ENCODE measurements at regions of chr4 and their contacts with region 1.

Region 1: GRCh38 chr4:14856076-14856933 is 146.0 kb upstream of the CPEB2 start:
- DNase-seq: peak; percentile 88
- H3K4me3 Mint-ChIP-seq: no peak overlapping the region
- H3K27ac Mint-ChIP-seq: peak overlapping the region; percentile 86
- H3K4me1 Mint-ChIP-seq: peaks cover 24% of the 10 kb centered on the region
- H3K27me3 Mint-ChIP-seq: peaks cover 19% of the 10 kb centered on the region

Region 2: GRCh38 chr4:13892739-13893105 is 963.6 kb before region 1 on chr4:
- CTCF ChIA-PET with region 1: no interaction called
- intact Hi-C with region 1: loop called (anchors 5 kb)
- DNase-seq: no peak
- H3K4me3 Mint-ChIP-seq: no peak overlapping the region
- H3K27ac Mint-ChIP-seq: peak overlapping the region; percentile 55
- H3K4me1 Mint-ChIP-seq: peaks cover 17% of the 10 kb centered on the region
- H3K27me3 Mint-ChIP-seq: peaks cover 17% of the 10 kb centered on the region

Region 3: DNA sequence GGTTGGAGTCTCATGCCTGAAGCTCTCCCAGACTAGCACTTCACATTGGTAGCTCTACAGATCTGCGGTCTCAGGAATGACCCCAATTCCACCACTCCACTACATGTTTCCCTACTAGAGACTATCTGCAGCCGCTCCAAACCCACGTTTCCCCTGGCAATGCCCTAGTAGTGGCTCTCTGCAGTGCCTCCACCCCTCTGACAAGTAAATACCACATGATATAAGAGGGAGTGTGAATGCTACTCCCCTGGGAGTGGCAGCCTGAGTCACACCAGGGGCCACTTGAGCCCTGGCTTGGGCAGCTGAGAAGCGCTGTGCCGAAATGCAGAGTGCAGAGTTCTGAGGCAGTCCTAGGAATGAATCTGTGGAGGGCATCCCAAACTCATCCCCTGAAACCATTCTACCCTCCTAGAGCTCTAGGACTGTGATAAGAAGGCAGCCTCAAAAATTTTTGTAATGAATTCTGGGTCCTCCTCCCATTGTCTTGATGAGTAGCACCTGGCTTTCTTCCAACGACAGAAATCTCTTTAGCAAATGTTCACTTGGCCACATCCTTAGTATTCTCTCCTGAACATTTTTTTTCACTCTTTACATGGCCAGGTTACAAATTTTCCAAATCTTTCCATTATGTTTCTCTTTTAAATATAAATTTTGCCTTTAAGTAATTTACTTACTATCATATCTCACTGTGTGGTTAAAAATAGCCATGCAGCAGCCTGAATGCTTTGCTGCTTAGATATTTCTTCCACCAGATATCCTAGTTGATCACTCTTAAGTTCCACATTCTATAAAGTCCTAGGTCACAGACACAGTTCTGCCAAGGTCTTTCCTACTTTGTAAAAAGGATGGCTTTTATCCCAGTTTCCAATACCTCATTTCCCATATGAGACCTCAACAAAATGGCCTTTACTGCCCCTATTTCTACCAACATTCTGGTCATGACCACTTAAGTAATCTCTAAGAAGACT is 14.2 kb before region 1 on chr4:
- CTCF ChIA-PET with region 1: no interaction called
- intact Hi-C with region 1: loop called (anchors 1 kb)
- DNase-seq: no peak
- H3K4me3 Mint-ChIP-seq: no peak overlapping the region
- H3K27ac Mint-ChIP-seq: peak overlapping the region; percentile 65
- H3K4me1 Mint-ChIP-seq: peaks cover 13% of the 10 kb centered on the region
- H3K27me3 Mint-ChIP-seq: peaks cover 4% of the 10 kb centered on the region

Region 4: GRCh38 chr4:15117270-15117946 is 261.1 kb after region 1 on chr4:
- CTCF ChIA-PET with region 1: no interaction called
- intact Hi-C with region 1: loop called (anchors 1 kb)
- DNase-seq: peak; percentile 13
- H3K4me3 Mint-ChIP-seq: no peak overlapping the region
- H3K27ac Mint-ChIP-seq: no peak overlapping the region
- H3K4me1 Mint-ChIP-seq: peaks cover 11% of the 10 kb centered on the region
- H3K27me3 Mint-ChIP-seq: peaks cover 24% of the 10 kb centered on the region

Region 5: DNA sequence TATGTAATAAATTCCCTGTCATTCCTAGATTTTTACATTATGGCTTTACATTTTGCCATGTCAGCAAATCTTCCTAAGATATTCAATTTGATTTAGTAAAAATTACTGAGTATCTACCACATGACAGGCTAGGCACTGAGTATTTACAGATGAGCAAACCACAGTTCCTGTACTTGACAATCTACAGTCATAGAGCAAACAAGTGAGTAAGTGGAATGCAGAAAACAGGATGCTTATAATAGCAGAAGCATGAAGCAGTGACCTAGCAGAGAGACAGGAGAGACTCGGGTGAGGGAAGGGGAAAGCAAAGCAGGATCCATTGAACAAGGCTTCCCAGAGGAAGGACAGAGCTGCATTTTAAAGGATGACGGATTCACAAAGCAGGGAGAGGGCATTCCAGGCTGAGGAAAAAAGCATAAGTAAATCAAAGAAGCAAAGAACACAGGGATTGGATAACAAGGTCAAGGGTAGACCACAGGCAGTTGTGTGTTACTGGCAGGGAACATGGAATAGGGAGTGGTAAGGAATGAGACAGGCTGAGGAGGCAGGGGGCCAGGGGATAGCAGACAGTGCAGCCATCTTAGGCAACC is 446.8 kb after region 1 on chr4:
- CTCF ChIA-PET with region 1: no interaction called
- intact Hi-C with region 1: no loop called
- DNase-seq: no peak
- H3K4me3 Mint-ChIP-seq: no peak overlapping the region
- H3K27ac Mint-ChIP-seq: no peak overlapping the region
- H3K4me1 Mint-ChIP-seq: no peaks in the 10 kb centered on the region
- H3K27me3 Mint-ChIP-seq: no peaks in the 10 kb centered on the region

Region 6: GRCh38 chr4:15396157-15396800 is 540.0 kb after region 1 on chr4:
- CTCF ChIA-PET with region 1: interaction called, 4 read pairs
- intact Hi-C with region 1: loop called (anchors 1 kb)
- DNase-seq: peak; percentile 79
- H3K4me3 Mint-ChIP-seq: no peak overlapping the region
- H3K27ac Mint-ChIP-seq: no peak overlapping the region
- H3K4me1 Mint-ChIP-seq: peaks cover 26% of the 10 kb centered on the region
- H3K27me3 Mint-ChIP-seq: no peaks in the 10 kb centered on the region

Region 7: DNA sequence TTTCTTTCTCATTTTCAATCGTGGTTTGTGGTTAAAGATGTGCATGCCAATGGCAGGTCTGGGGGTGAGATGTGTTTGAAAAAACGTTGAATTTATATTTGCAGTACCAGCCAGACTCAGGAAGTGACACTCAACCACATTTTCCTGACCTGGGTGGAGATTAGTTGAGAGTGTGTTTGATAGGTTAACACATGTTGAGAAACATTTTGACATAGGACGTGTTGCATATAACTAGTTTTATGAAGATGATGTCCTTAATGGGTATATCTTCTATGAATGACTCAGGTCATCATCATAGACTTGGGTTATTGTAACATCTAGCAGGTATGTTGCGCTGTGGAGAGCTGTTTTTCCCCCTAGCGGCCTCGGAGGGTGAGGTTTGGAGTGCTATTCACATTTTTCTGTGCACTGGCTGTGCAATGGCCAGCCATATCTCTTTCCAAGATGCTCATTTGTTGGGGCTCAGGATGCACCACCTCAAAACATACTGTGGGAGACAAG is 900.1 kb after region 1 on chr4:
- CTCF ChIA-PET with region 1: no interaction called
- intact Hi-C with region 1: loop called (anchors 10 kb)
- DNase-seq: peak; percentile 89
- H3K4me3 Mint-ChIP-seq: peak overlapping the region; percentile 54
- H3K27ac Mint-ChIP-seq: peak overlapping the region; percentile 83
- H3K4me1 Mint-ChIP-seq: peaks cover 44% of the 10 kb centered on the region
- H3K27me3 Mint-ChIP-seq: no peaks in the 10 kb centered on the region